ENCODE measurements at regions of chr10 and their contacts with region 1.

Region 1: GRCh38 chr10:93916257-93917063 is 22.7 kb downstream of the SLC35G1 start:
- DNase-seq: peak; percentile 26 to 58
- ATAC-seq: peak; percentile 84 to 91; a peak in 5 of 6 replicates
- H3K4me3 ChIP-seq: no peak overlapping the region
- H3K27ac ChIP-seq: peak overlapping the region; percentile 21 to 62; a peak in 4 of 6 replicates
- H3K4me1 ChIP-seq: peaks cover 19% of the 10 kb centered on the region; the same call in 2 of the 3 replicates
- CTCF ChIP-seq: peak; percentile 87
- EP300 ChIP-seq: no peak
- POLR2A ChIP-seq: no peak
- RAD21 ChIP-seq: peak; percentile 86 to 91

Region 2: DNA sequence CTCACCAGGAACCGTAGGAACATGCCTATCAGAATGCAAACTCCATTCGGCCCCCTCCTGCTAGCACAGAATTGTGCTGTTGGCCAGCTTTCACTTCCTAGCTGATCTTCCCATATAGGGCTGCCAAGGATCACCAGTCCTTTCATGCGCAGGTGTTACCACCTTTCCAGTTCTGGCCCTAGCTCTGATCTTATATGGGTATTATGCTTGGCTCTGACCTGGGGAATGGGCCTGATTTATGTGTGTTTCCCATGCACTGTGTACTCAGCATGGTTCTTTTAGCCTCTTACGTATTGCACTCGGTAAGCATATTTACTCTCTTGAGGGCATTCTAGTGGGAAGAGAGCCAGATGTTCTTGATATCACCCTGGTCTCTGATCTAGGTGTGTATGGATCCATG is 11.6 kb before region 1 on chr10:
- CTCF ChIA-PET with region 1: interaction called, 34 read pairs
- POLR2A ChIA-PET with region 1: no interaction called
- DNase-seq: no peak
- ATAC-seq: no peak
- H3K4me3 ChIP-seq: no peak overlapping the region
- H3K27ac ChIP-seq: no peak overlapping the region
- H3K4me1 ChIP-seq: no peaks in the 10 kb centered on the region
- CTCF ChIP-seq: no peak
- EP300 ChIP-seq: no peak
- POLR2A ChIP-seq: no peak
- RAD21 ChIP-seq: no peak

Region 3: DNA sequence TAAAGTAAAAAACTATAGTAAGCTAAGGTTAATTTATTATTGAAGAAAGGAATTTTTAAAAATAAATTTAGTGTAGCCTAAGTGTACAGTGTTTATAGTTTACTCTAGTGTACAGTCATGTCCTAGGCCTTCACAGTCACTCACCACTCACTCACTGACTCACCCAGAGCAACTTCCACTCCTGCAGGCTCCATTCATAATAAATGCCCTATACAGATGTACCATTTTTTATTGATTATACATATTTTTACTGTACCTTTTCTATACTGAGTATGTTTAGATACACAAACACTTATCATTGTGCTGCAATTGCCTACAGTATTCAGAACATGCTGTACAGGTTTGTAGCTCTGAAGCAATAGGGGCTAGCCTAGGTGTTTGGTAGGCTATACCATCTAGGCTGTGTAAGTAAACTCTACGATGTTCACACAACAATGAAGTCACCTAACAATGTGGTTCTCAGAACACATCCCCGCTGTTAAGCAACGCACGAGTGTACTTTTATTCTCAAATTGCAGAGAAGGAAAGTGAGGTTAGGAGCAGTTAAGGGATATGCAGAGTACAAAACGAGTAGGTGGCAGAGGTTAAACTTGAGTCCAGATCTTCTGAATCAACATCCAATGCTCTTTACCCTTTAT is 38.4 kb after region 1 on chr10:
- CTCF ChIA-PET with region 1: interaction called, 10 read pairs
- POLR2A ChIA-PET with region 1: no interaction called
- DNase-seq: peak in 1 of 2 experiments; percentile 16
- ATAC-seq: peak in 1 of 2 experiments; percentile 90; a peak in 3 of 6 replicates
- H3K4me3 ChIP-seq: no peak overlapping the region
- H3K27ac ChIP-seq: peak overlapping the region; percentile 11 to 47; a peak in 2 of 6 replicates
- H3K4me1 ChIP-seq: peaks cover 13% of the 10 kb centered on the region
- CTCF ChIP-seq: no peak
- EP300 ChIP-seq: no peak
- POLR2A ChIP-seq: no peak
- RAD21 ChIP-seq: no peak

Region 4: GRCh38 chr10:94042001-94042833 is 125.8 kb after region 1 on chr10:
- CTCF ChIA-PET with region 1: interaction called, 29 read pairs
- POLR2A ChIA-PET with region 1: interaction called, 3 read pairs
- DNase-seq: peak; percentile 75 to 87
- ATAC-seq: peak; percentile 77 to 86
- H3K4me3 ChIP-seq: 0 out of 3 replicates have a peak overlapping the region, but pooled peaks have one; percentile 9
- H3K27ac ChIP-seq: peak overlapping the region; percentile 91
- H3K4me1 ChIP-seq: peaks cover 82% of the 10 kb centered on the region
- CTCF ChIP-seq: peak; percentile 51
- EP300 ChIP-seq: peak; percentile 48; a peak in 1 of 5 replicates
- POLR2A ChIP-seq: no peak
- RAD21 ChIP-seq: peak; percentile 42 to 67; a peak in 4 of 5 replicates

Region 5: DNA sequence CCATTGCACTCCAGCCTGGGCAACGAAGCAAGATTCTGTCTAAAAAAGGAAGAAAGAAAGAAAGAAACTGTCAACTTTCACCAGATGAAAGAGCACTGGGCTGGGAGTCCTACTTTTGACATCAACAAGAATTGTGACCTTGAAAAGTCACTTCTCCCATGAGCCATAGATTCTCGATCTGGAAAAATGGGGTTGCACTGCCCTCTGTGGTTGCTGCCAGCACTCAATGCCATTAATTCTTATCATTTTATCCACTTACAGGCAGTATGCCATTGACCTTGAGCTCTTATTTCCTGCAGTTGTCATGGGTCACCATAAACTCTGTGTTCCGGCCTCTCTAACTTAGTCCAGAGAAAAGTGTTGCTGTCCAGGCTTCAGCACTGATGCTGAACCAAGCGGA is 309.1 kb after region 1 on chr10:
- CTCF ChIA-PET with region 1: interaction called, 14 read pairs
- POLR2A ChIA-PET with region 1: no interaction called
- DNase-seq: peak; percentile 22 to 45
- ATAC-seq: peak in 1 of 2 experiments; percentile 68; a peak in 3 of 6 replicates
- H3K4me3 ChIP-seq: no peak overlapping the region
- H3K27ac ChIP-seq: peak overlapping the region; percentile 31 to 68; a peak in 2 of 6 replicates
- H3K4me1 ChIP-seq: peaks cover 25% of the 10 kb centered on the region
- CTCF ChIP-seq: peak; percentile 49
- EP300 ChIP-seq: no peak
- POLR2A ChIP-seq: no peak
- RAD21 ChIP-seq: peak; percentile 72

Region 6: DNA sequence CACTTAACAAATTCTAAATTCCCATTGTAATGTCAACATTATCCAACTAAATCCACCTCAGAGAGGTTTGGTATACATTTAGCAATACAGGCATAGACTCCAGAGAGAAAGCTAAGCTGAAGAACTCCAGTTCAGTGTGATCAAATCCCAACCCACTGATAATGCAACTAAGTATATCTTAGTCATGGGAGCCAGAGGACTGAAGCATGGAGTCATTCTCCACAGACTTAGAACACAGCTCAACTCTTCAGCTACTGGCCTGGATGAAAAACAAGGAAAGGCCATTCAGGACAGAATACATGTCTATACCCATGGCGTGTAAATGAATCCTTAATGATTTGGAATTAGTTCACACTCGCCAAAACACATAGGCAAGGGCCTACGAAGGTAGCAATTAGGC is 418.4 kb after region 1 on chr10:
- CTCF ChIA-PET with region 1: interaction called, 10 read pairs
- POLR2A ChIA-PET with region 1: no interaction called
- DNase-seq: no peak
- ATAC-seq: no peak
- H3K4me3 ChIP-seq: no peak overlapping the region
- H3K27ac ChIP-seq: no peak overlapping the region
- H3K4me1 ChIP-seq: peaks cover 7% of the 10 kb centered on the region; the same call in 1 of the 3 replicates
- CTCF ChIP-seq: no peak
- EP300 ChIP-seq: no peak
- POLR2A ChIP-seq: no peak
- RAD21 ChIP-seq: no peak